Activated CD8-positive, alpha-beta T cell treated with anti-CD3 and anti-CD28 coated beads for 36 hours (primary cell): ENCODE measurements at regions of chr1 and their contacts with region 1.

Region 1: DNA sequence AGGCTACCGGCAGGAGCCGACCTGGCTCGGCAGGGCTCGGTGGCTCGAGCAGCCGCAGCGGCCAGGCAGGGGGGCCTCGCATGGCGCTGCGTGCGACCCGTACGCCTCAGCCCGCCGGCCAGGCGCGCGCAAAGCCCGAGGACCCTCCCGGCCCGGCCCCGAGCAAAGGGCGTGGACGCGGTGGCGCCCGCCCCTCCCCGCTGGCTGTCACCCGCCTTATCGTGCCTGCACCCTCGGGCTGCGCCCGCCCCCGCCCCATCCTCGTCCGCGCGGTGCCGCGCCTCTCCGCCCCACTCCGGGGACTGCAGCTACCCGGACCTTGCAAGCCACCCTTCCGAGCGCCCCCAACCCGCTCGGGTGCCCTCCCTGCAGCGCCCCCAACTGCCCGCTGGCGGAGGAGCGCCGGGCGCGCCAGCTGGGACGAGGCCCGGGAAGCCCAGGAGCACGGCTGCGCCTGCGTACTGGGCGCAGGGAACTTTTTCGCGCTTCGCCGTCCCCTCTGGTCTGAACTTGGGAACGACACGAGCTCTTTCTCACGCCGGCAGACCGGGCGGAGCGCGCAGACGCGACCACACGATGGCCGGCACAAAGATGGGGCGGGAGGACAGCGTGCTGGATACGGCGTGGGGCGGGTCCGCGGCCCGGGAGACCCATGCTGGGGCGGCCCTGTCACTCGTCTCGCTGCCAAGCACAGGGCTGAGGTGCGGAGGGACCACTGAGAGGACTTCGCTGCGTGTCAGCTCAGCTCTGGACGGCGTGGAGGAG is at the start of gene ABCB10:
- DNase-seq: peak; percentile 92
- ATAC-seq: peak; percentile 85
- H3K4me3 Mint-ChIP-seq: peak within 1 kb of the TSS; percentile 92
- H3K27ac Mint-ChIP-seq: peak within 1 kb of the TSS; percentile 92
- H3K4me1 Mint-ChIP-seq: peaks cover 30% of the 10 kb centered on the region
- H3K27me3 Mint-ChIP-seq: no peaks in the 10 kb centered on the region
- CTCF ChIP-seq: peak; percentile 50
- total RNA-seq, gene ABCB10: 30.7 to 32.1 TPM

Region 2: DNA sequence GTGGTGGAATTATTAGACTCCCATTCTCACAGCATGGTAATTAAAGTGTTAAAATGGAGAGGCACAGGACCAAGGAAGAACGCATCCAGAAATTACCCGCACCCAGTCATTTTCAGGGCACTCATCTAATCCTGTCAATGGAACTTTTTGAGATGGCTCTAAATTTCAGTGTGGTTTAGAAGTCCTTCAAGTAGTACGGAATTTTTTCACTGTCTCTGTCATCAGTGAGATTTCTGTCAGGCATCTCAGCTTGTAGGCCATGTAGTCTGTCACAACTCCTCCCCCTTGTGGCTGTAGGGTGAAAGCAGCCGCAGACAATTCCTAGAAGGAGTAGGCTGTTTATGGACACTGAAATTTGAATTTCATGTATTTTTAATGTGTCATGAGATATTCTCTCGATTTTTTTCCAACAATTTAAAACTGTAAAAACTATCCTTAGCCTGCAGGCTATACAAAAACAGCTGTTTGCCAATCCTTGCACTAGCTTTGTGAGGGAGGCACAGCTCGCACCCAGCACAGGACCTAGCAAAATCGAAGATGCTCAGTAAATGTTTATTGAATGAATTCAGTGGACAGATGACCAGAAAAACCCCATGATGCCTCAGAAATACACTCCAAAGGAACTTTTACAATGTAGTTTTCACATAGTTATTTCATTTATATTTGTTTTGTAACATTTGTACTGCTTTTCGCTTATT is 44.0 kb before region 1 on chr1:
- CTCF ChIA-PET with region 1: interaction called, 11 read pairs
- POLR2A ChIA-PET with region 1: no interaction called
- intact Hi-C with region 1: no loop called
- DNase-seq: peak; percentile 66
- ATAC-seq: peak; percentile 88
- H3K4me3 Mint-ChIP-seq: no peak overlapping the region
- H3K27ac Mint-ChIP-seq: no peak overlapping the region
- H3K4me1 Mint-ChIP-seq: peaks cover 8% of the 10 kb centered on the region
- H3K27me3 Mint-ChIP-seq: no peaks in the 10 kb centered on the region
- CTCF ChIP-seq: peak; percentile 90

Region 3: GRCh38 chr1:229537894-229538293 is 20.9 kb before region 1 on chr1:
- CTCF ChIA-PET with region 1: no interaction called
- POLR2A ChIA-PET with region 1: no interaction called
- intact Hi-C with region 1: loop called (anchors 2 kb)
- DNase-seq: no peak
- ATAC-seq: no peak
- H3K4me3 Mint-ChIP-seq: no peak overlapping the region
- H3K27ac Mint-ChIP-seq: no peak overlapping the region
- H3K4me1 Mint-ChIP-seq: peaks cover 12% of the 10 kb centered on the region
- H3K27me3 Mint-ChIP-seq: no peaks in the 10 kb centered on the region
- CTCF ChIP-seq: no peak

Region 4: DNA sequence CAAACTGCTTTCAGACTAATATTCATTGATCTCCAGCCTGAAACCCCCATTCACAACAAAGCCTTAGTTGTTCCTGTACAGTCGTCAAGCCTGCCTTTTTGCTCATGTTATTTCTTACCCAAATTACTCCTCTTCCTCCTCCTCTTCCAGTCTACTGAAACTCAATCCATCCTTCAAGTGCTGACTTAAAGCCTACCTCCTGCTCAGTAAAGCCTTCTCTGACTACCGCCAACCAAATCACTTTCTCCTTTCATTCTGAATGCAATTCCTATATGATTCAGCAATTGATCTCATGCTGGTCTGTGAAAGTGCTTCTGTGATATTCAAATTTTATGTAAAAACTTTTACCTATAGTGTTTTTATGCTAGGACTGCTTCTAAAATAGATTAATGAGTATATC is 48.6 kb after region 1 on chr1:
- CTCF ChIA-PET with region 1: no interaction called
- POLR2A ChIA-PET with region 1: no interaction called
- intact Hi-C with region 1: no loop called
- DNase-seq: no peak
- ATAC-seq: no peak
- H3K4me3 Mint-ChIP-seq: no peak overlapping the region
- H3K27ac Mint-ChIP-seq: no peak overlapping the region
- H3K4me1 Mint-ChIP-seq: no peaks in the 10 kb centered on the region
- H3K27me3 Mint-ChIP-seq: no peaks in the 10 kb centered on the region
- CTCF ChIP-seq: no peak

Region 5: GRCh38 chr1:229625915-229626831 is 67.4 kb after region 1 on chr1 and contains the starts of genes TAF5L and URB2:
- CTCF ChIA-PET with region 1: interaction called, 10 read pairs
- POLR2A ChIA-PET with region 1: interaction called, 26 read pairs
- intact Hi-C with region 1: loop called (anchors 10 kb)
- DNase-seq: peak; percentile 87
- ATAC-seq: peak; percentile 94
- H3K4me3 Mint-ChIP-seq: peak within 1 kb of the TSS; percentile 94
- H3K27ac Mint-ChIP-seq: peak within 1 kb of the TSS; percentile 97
- H3K4me1 Mint-ChIP-seq: peaks cover 50% of the 10 kb centered on the region
- H3K27me3 Mint-ChIP-seq: no peaks in the 10 kb centered on the region
- CTCF ChIP-seq: no peak
- total RNA-seq, gene TAF5L: 17.7 to 19.5 TPM
- total RNA-seq, gene URB2: 17.4 to 17.7 TPM